Right cardiac atrium (tissue), 5 donors: ENCODE measurements at regions of chr2 and their contacts with region 1.

Region 1: GRCh38 chr2:21317131-21317530 is 193.4 kb downstream of the TDRD15 start:
- DNase-seq: peak in 2 of 3 donors; percentile 44 to 66
- ATAC-seq: peak; percentile 68 to 73
- H3K4me3 ChIP-seq: no peak overlapping the region
- H3K27ac ChIP-seq: no peak overlapping the region
- H3K4me1 ChIP-seq: peaks cover 3% of the 10 kb centered on the region
- H3K27me3 ChIP-seq: no peaks in the 10 kb centered on the region

Region 2: DNA sequence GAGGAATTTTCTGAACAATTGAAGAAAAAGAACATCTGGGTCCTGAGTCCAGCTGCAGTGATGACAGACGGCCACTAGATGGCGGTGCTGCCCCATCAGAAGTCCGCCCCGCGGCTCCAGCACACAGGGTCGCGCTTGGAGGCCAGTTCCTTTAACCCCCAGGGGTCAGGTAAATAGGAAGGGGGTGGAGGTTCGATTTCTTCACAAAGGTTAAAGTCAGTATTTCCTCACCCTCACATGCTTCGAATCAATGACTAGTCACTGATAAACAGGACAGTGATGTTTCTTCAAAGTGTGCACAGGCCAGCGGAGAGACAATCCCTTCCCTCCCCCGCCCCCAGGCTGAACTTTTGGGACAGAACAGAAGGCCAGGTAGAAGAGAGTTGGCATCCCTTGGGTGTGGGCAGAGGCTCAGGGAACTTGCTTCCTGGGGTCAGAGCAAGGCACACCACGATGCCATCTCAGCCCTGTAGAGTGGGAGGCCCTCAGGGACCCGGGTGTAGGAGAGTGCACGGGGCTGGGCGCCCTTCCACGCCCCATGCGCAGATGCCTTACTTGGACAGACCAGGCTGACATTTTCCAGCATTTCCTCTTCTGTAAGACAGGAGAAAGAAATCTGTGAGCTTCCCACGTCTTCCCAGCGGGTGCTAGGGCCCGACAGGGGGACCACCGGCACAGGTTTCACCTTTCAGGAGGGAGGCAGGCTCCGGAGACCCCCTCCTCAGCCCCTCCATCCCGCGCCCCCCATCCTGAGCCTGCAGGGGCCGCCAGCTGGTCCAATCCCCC is 274.0 kb before region 1 on chr2:
- intact Hi-C with region 1: loop called in 3 of 4 experiments (anchors 5 to 10 kb)
- DNase-seq: peak; percentile 55 to 83 (median 83)
- ATAC-seq: peak; percentile 45 to 67
- H3K4me3 ChIP-seq: no peak overlapping the region
- H3K27ac ChIP-seq: no peak overlapping the region
- H3K4me1 ChIP-seq: peaks cover 2% of the 10 kb centered on the region
- H3K27me3 ChIP-seq: no peaks in the 10 kb centered on the region

Region 3: DNA sequence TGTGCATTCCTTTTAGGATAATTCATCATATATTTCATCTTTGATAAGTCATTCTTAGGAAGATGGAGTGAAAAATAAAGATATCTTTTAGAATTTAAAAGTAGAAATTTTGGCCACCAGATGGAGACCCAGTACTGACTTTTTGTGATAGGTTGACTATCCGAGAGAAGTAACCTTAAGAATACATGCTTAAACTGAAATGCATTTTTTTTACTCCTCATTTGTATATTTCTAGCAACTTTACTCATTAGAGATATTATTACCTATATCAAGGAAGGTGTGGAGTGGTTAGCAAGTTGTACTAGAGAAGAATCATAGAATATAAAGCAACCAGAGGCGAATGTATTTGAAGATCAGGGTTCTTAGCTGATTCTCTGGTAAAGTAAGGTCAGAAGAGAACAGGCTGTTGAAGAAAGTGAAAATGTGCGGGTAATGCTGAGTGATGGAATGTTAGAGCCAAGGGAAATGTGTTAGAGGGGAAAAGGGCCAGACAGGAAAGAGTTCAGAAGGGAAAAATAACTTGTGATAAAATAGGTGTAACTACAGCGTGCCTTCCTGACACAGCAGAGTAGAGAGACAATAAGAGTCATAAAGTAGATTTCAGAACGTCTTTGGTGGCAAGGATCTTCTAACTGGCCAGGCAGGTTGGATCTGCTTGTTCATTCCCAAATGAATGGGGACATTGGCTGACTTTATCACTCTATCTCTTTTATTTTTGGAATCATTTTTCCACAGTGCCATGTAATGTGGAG is 141.1 kb before region 1 on chr2:
- intact Hi-C with region 1: loop called (anchors 2 to 5 kb)
- DNase-seq: no peak
- ATAC-seq: peak; percentile 26 to 54
- H3K4me3 ChIP-seq: no peak overlapping the region
- H3K27ac ChIP-seq: no peak overlapping the region
- H3K4me1 ChIP-seq: peaks cover 2% of the 10 kb centered on the region
- H3K27me3 ChIP-seq: no peaks in the 10 kb centered on the region